ENCODE measurements at regions of chr7 and their contacts with region 1.

Region 1: DNA sequence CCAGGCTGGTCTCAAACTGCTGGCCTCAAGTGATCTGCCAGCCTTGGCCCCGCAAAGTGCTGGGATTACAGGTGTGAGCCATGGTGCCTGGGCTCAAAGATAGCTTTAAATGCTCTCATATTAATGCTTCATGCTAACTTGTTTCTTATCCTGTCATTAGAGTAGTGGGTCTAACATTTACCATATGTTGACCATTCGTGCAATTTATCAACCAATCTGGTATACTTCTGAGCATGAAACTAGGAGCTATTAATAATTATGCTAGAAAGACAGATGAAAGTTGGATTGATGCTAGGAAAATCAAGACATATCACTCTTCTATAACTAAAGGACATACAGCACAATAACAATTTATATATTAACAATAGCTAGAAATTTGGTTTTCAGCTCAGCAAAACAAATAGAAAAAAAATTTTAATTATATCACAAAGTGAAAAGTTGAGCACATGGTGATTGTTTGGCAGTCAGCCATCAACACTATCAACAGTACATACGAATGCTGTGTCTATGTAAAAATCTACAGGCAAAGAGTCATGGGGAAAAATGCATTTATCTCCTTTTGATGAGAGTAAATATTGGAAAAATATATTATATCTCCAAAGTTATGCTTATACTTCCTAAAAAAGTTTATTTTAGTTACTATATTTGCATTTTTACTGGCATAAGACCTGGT is 112.1 kb upstream of the ABCB5 start:
- DNase-seq: no peak
- ATAC-seq: no peak
- H3K4me3 ChIP-seq: no peak overlapping the region
- H3K27ac ChIP-seq: no peak overlapping the region
- H3K4me1 ChIP-seq: no peaks in the 10 kb centered on the region
- H3K27me3 ChIP-seq: no peaks in the 10 kb centered on the region
- CTCF ChIP-seq: no peak

Region 2: GRCh38 chr7:20474249-20474648 is 29.2 kb before region 1 on chr7:
- CTCF ChIA-PET with region 1: no interaction called
- POLR2A ChIA-PET with region 1: interaction called, 17 read pairs
- in situ Hi-C with region 1: no loop called
- intact Hi-C with region 1: no loop called
- DNase-seq: no peak
- ATAC-seq: no peak
- H3K4me3 ChIP-seq: no peak overlapping the region
- H3K27ac ChIP-seq: no peak overlapping the region
- H3K4me1 ChIP-seq: no peaks in the 10 kb centered on the region
- H3K27me3 ChIP-seq: no peaks in the 10 kb centered on the region
- CTCF ChIP-seq: no peak

Region 3: DNA sequence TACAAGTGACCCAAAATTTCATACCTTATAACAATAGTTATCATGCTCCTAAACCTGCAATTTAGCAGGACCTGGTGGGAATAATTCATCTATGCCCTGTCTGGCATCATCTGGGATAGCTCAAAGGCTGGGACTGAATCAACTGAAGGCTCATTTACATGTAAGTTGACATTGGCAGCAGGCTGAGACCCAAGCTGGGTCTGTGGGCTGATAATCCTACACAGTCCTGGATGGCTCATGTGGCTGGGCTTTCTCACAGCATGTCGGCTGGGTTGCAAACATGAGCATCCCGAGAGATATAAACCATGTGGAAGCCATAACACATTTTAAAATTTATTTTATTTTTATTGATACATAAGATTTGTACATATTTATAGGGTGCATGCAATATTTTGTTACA is 92.6 kb after region 1 on chr7:
- CTCF ChIA-PET with region 1: no interaction called
- POLR2A ChIA-PET with region 1: no interaction called
- in situ Hi-C with region 1: no loop called
- intact Hi-C with region 1: no loop called
- DNase-seq: no peak
- ATAC-seq: no peak
- H3K4me3 ChIP-seq: no peak overlapping the region
- H3K27ac ChIP-seq: no peak overlapping the region
- H3K4me1 ChIP-seq: no peaks in the 10 kb centered on the region
- H3K27me3 ChIP-seq: no peaks in the 10 kb centered on the region
- CTCF ChIP-seq: no peak